Psoas muscle (tissue), 8 donors: ENCODE measurements at regions of chr18 and their contacts with region 1.

Region 1: GRCh38 chr18:5132987-5133386 is 64.1 kb downstream of the AKAIN1 start:
- DNase-seq: no peak
- ATAC-seq: no peak
- H3K4me3 ChIP-seq: no peak overlapping the region
- H3K27ac ChIP-seq: no peak overlapping the region
- H3K4me1 ChIP-seq: no peaks in the 10 kb centered on the region
- H3K27me3 ChIP-seq: no peaks in the 10 kb centered on the region
- CTCF ChIP-seq: no peak

Region 2: DNA sequence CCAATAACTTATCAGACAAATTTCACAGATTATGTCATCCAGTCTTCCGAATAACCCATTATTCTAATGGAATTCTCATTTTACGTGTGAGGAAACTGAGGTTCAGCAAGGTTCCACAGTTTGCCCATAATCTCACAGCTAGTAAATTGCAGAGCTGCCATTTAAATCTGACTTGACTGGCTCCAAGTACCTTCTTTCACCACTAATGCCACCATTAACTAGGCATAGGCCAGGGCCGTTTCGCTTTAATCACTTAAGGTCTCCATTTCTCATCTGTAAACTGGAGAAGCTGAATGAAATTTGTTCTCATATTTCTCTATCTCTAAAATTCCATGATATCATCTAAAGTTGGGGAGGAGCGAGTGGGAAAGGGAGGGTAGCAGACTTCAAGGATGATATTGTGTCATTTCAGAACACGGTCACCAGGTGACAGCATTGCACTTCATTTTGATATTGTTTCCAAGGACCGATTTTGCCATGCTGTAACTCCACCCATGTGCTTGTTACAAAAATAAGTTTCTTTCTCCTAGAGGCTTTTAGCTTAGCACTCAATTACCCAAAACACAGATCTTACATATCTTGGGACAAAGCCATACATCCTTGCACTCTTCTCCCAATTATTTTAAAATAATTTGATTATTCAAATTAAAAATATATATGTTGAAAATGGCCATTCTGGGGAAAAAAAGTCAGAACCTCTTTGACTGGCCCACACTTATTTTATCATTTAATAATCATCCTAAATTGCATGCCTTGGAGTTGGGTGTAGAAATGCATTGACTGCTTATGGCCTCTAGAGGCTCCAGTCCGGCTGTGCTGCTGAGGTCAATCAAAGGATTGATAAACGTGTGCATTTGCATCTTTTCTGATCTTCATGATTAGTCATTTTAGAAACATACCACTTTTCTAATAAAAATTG is 59.7 kb before region 1 on chr18:
- intact Hi-C with region 1: no loop called
- DNase-seq: no peak
- ATAC-seq: peak in 1 of 4 donors; percentile 72
- H3K4me3 ChIP-seq: no peak overlapping the region
- H3K27ac ChIP-seq: no peak overlapping the region
- H3K4me1 ChIP-seq: no peaks in the 10 kb centered on the region
- H3K27me3 ChIP-seq: no peaks in the 10 kb centered on the region
- CTCF ChIP-seq: peak; percentile 38

Region 3: DNA sequence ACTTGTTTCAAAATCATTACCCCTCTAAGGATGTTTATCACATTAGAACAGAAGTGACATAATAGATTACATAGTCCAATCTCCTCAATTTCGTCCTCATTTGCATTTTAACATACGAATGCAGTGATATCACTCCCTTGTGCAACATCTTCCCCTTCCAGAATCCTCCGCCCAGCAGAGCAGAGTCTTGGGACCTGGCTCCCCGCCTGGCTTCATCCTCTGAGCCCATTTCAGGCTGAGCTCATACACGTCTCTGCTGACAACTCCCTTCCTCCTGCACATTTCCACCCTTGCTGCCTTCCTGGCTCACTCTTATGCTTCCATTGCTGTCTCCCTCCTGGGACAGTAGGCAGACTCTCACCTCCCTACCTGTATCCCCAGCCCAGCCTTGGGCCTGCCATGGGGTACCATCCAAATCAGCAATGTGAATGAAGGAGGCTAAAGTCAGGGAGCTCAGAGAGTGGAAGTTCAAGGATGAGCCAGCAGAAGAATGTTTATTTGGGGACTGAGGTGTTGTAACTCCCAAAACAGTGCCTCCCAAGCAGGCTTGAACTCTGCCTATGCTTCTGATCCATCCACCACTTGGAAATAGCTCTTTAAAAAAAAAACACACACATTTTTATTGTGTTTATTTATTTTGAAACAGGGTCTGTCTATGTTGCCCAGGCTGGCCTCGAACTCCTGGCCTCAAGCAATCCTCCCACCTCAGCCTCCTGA is 597.2 kb after region 1 on chr18:
- intact Hi-C with region 1: loop called in 1 of 2 experiments (anchors 5 kb)
- DNase-seq: peak; percentile 78 to 87
- ATAC-seq: peak in 2 of 4 donors; percentile 51 to 65
- H3K4me3 ChIP-seq: no peak overlapping the region
- H3K27ac ChIP-seq: no peak overlapping the region
- H3K4me1 ChIP-seq: no peaks in the 10 kb centered on the region
- H3K27me3 ChIP-seq: no peaks in the 10 kb centered on the region
- CTCF ChIP-seq: no peak